Naive thymus-derived CD4-positive, alpha-beta T cell (primary cell): ENCODE measurements at regions of chr11 and their contacts with region 1.

Region 1: GRCh38 chr11:134223836-134224709 is at the starts of genes NCAPD3 and VPS26B:
- DNase-seq: peak; percentile 91 to 96 (median 94)
- ATAC-seq: peak; percentile 89
- H3K4me3 ChIP-seq: peak within 1 kb of the TSS; percentile 94
- H3K4me3 Mint-ChIP-seq: peak within 1 kb of the TSS; percentile 95 to 98 (median 97)
- H3K27ac ChIP-seq: peak within 1 kb of the TSS; percentile 92
- H3K27ac Mint-ChIP-seq: peak within 1 kb of the TSS; percentile 98 to 99 (median 99)
- H3K4me1 ChIP-seq: peaks cover 41 to 43% of the 10 kb centered on the region in 2 donors
- H3K4me1 Mint-ChIP-seq: peaks cover 38 to 64% (median 55%) of the 10 kb centered on the region in 7 donors
- H3K27me3 ChIP-seq: no peaks in the 10 kb centered on the region
- H3K27me3 Mint-ChIP-seq: peaks cover 0 to 4% (median 0%) of the 10 kb centered on the region in 5 donors
- total RNA-seq, gene NCAPD3: 31.5 to 90.9 (median 40.3) TPM
- total RNA-seq, gene VPS26B: 50.9 to 69.2 (median 61.8) TPM

Region 2: DNA sequence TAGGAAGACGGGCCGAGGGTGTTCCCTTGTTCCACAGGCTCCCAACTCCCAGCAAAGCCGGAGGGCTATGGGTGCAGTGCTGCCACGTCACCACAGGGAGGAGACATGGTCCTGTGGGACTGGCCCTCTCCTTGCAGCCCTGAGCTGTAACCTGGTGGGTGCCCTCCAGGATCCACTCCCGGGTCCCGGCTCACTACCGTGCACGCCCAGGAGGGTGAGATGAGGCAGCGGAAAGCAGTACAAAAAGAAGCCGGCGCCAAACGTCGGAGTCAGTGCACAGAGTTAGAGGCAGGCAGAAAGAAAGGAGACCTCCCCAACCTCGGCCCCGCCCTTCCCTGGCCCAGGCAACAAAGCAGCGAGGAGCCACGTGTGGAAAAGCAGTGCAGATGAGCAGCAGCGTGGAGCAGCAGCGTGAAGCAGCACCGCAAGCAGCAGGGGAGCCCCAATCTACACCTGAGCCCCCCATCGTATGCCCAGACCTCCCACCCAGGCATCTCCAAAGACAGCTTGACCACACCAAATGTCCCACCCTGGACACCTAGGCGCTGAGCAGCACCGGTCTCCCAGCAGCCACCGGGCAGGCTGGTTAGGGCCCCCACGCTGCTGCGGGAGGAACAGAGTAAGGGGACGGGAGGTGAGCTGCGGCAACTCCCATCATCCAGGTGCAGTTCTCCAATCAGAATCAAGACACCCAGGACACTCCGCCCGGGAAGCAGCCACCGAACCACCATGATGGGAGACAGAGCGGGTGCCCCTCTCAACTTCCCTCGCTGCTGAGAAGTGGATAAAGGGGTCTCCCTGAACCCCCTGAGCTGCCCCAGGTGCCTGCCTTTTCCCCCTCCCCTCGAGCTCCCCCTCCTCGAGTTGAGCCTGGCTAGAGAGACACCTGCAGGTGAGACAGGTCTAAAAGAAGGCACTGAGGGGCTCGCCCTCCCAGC is 296.1 kb before region 1 on chr11:
- CTCF ChIA-PET with region 1: no interaction called
- POLR2A ChIA-PET with region 1: no interaction called
- intact Hi-C with region 1: loop called in 1 of 2 experiments (anchors 5 kb)
- DNase-seq: peak; percentile 43 to 72 (median 70)
- ATAC-seq: peak; percentile 85
- H3K4me3 ChIP-seq: peak overlapping the region; percentile 47
- H3K4me3 Mint-ChIP-seq: peak overlapping the region; percentile 84 to 93 (median 88)
- H3K27ac ChIP-seq: peak overlapping the region; percentile 4
- H3K27ac Mint-ChIP-seq: peak overlapping the region; percentile 33 to 95 (median 81)
- H3K4me1 ChIP-seq: peaks cover 18% of the 10 kb centered on the region in 2 donors
- H3K4me1 Mint-ChIP-seq: peaks cover 16 to 37% (median 23%) of the 10 kb centered on the region in 7 donors
- H3K27me3 ChIP-seq: no peaks in the 10 kb centered on the region
- H3K27me3 Mint-ChIP-seq: no peaks in the 10 kb centered on the region

Region 3: GRCh38 chr11:133956650-133957633 is 267.1 kb before region 1 on chr11 and contains the start of gene IGSF9B:
- CTCF ChIA-PET with region 1: no interaction called
- POLR2A ChIA-PET with region 1: no interaction called
- intact Hi-C with region 1: loop called (anchors 1 kb)
- DNase-seq: peak; percentile 87 to 97 (median 92)
- ATAC-seq: peak; percentile 97
- H3K4me3 ChIP-seq: peak within 1 kb of the TSS; percentile 99
- H3K4me3 Mint-ChIP-seq: peak within 1 kb of the TSS; percentile 89 to 96 (median 92)
- H3K27ac ChIP-seq: peak within 1 kb of the TSS; percentile 75
- H3K27ac Mint-ChIP-seq: peak within 1 kb of the TSS; percentile 48 to 91 (median 88)
- H3K4me1 ChIP-seq: peaks cover 11 to 27% of the 10 kb centered on the region in 2 donors
- H3K4me1 Mint-ChIP-seq: peaks cover 29 to 52% (median 43%) of the 10 kb centered on the region in 7 donors
- H3K27me3 ChIP-seq: no peaks in the 10 kb centered on the region
- H3K27me3 Mint-ChIP-seq: peaks cover 7 to 24% (median 16%) of the 10 kb centered on the region in 5 donors
- total RNA-seq, gene IGSF9B: 17.6 to 155 (median 24.1) TPM

Region 4: GRCh38 chr11:134068829-134069425 is 155.1 kb before region 1 on chr11 and contains the start of gene JAM3:
- CTCF ChIA-PET with region 1: no interaction called
- POLR2A ChIA-PET with region 1: interaction called, 3 read pairs
- intact Hi-C with region 1: loop called (anchors 1 to 10 kb)
- DNase-seq: peak; percentile 95 to 97 (median 96)
- ATAC-seq: peak; percentile 95
- H3K4me3 ChIP-seq: peak within 1 kb of the TSS; percentile 71
- H3K4me3 Mint-ChIP-seq: peak within 1 kb of the TSS; percentile 84 to 97 (median 92)
- H3K27ac ChIP-seq: peak within 1 kb of the TSS; percentile 71
- H3K27ac Mint-ChIP-seq: peak within 1 kb of the TSS; percentile 59 to 96 (median 89)
- H3K4me1 ChIP-seq: peaks cover 6% of the 10 kb centered on the region in 2 donors
- H3K4me1 Mint-ChIP-seq: peaks cover 5 to 22% (median 13%) of the 10 kb centered on the region in 7 donors
- H3K27me3 ChIP-seq: no peaks in the 10 kb centered on the region
- H3K27me3 Mint-ChIP-seq: peaks cover 0 to 80% (median 6%) of the 10 kb centered on the region in 5 donors
- total RNA-seq, gene JAM3: 4.8 to 8.2 (median 6.3) TPM

Region 5: GRCh38 chr11:134235399-134235798 is 11.3 kb after region 1 on chr11:
- CTCF ChIA-PET with region 1: interaction called, 3 read pairs
- POLR2A ChIA-PET with region 1: interaction called, 13 read pairs
- intact Hi-C with region 1: no loop called
- DNase-seq: no peak
- ATAC-seq: no peak
- H3K4me3 ChIP-seq: no peak overlapping the region
- H3K4me3 Mint-ChIP-seq: no peak overlapping the region
- H3K27ac ChIP-seq: no peak overlapping the region
- H3K27ac Mint-ChIP-seq: peak overlapping the region in 1 of 9 donors; percentile 3
- H3K4me1 ChIP-seq: peaks cover 6 to 14% of the 10 kb centered on the region in 2 donors
- H3K4me1 Mint-ChIP-seq: peaks cover 15 to 28% (median 26%) of the 10 kb centered on the region in 7 donors
- H3K27me3 ChIP-seq: no peaks in the 10 kb centered on the region
- H3K27me3 Mint-ChIP-seq: no peaks in the 10 kb centered on the region

Region 6: DNA sequence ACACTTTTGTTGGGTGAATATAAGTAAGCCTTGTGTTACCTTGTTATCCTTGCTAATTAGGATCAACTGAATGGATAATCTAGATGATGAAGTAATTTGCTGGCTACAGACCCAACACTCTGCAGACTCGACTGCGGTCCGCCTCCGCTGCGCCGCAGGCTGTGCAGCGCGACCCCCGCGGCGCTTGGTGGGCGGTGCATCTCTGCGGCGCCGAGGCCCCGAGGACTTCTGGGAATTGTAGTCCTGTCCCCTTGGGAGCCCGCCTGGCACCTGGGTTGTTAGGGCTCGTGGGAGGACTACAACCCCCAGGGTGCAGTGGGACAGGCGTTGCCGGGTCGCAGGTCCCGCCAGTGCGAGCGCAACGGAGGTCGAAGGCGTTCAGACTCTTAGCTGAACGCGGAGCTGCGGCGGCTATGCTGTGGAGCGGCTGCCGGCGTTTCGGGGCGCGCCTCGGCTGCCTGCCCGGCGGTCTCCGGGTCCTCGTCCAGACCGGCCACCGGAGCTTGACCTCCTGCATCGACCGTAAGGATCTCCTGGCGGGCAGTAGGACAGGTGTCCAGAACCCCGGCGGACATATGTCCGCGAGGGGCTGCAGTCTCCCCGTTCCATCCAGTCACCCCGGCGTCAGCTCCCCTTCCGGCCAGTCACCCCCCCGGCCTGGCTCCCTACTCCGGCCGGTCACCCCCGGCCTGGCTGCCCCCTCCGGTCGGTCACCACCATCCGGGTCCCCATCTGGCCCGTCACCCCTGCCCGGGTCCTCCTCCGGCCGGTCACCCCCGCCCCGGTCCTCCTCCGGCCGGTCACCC is 29.3 kb after region 1 on chr11 and contains the starts of genes ACAD8 and THYN1:
- CTCF ChIA-PET with region 1: interaction called, 7 read pairs
- POLR2A ChIA-PET with region 1: interaction called, 111 read pairs
- intact Hi-C with region 1: loop called (anchors 1 kb)
- DNase-seq: peak; percentile 82 to 98 (median 95)
- ATAC-seq: peak; percentile 100
- H3K4me3 ChIP-seq: peak within 1 kb of the TSS; percentile 89
- H3K4me3 Mint-ChIP-seq: peak within 1 kb of the TSS; percentile 79 to 99 (median 94)
- H3K27ac ChIP-seq: peak within 1 kb of the TSS; percentile 73
- H3K27ac Mint-ChIP-seq: peak within 1 kb of the TSS; percentile 75 to 92 (median 88)
- H3K4me1 ChIP-seq: peaks cover 16 to 18% of the 10 kb centered on the region in 2 donors
- H3K4me1 Mint-ChIP-seq: peaks cover 24 to 47% (median 40%) of the 10 kb centered on the region in 7 donors
- H3K27me3 ChIP-seq: no peaks in the 10 kb centered on the region
- H3K27me3 Mint-ChIP-seq: no peaks in the 10 kb centered on the region
- total RNA-seq, gene ACAD8: 18.5 to 40.2 (median 26.1) TPM
- total RNA-seq, gene THYN1: 34.4 to 67.7 (median 62.5) TPM

Region 7: DNA sequence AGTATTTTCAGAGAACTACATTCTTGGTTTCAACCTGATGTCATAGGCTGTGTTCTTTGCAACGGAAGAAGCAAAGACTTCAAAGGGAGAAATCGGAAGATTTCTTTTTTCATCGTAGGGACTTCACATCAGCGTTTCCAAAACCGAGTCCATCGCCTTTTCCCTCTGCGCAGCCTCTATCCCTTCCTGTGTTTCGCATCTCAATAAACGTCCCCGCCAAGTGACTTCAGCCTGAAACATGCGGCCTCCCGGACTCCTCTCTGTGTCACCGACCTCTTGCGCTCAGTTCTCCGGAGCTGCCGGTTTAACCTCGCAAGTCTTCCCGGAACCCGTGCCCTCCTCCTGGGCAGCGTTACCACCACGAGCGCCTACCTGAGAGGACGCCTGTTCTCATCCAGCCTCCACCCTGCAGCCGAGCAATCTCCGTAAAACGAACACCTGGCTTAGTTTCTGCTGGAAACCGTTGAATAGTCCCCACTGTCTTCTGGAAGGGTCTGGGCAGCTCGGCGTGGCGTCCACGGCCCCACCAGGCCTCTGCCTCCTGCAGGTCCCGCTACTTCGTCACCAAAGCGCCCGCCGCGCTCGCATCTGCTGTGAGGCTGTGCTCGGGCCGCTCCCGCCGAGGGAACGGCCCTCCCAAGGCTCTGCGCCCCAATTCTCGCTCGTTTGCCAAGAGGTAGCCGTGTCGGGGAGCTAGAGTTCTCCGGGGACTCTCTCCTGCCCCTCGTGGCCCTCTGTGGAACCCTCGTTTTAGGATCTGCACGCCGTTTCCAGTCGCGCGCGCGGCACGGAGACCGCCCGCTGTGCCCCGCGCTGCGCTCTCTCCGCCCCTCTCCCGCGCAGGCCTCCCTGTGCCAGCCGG is 51.7 kb after region 1 on chr11 and contains the start of gene GLB1L3:
- CTCF ChIA-PET with region 1: interaction called, 3 read pairs
- POLR2A ChIA-PET with region 1: interaction called, 16 read pairs
- intact Hi-C with region 1: loop called (anchors 1 kb)
- DNase-seq: peak; percentile 58 to 81 (median 79)
- ATAC-seq: peak; percentile 94
- H3K4me3 ChIP-seq: peak within 1 kb of the TSS; percentile 93
- H3K4me3 Mint-ChIP-seq: peak within 1 kb of the TSS; percentile 90 to 99 (median 95)
- H3K27ac ChIP-seq: peak within 1 kb of the TSS; percentile 69
- H3K27ac Mint-ChIP-seq: peak within 1 kb of the TSS; percentile 66 to 94 (median 92)
- H3K4me1 ChIP-seq: peaks cover 21 to 31% of the 10 kb centered on the region in 2 donors
- H3K4me1 Mint-ChIP-seq: peaks cover 26 to 54% (median 50%) of the 10 kb centered on the region in 7 donors
- H3K27me3 ChIP-seq: no peaks in the 10 kb centered on the region
- H3K27me3 Mint-ChIP-seq: peaks cover 0 to 11% (median 4%) of the 10 kb centered on the region in 5 donors
- total RNA-seq, gene GLB1L3: 1.0 to 11.4 (median 2.5) TPM